ENCODE measurements at regions of chr3 and their contacts with region 1.

Region 1: GRCh38 chr3:151227807-151228665 is 25.0 kb upstream of the GPR171 start:
- DNase-seq: peak; percentile 89
- ATAC-seq: peak; percentile 64
- H3K4me3 Mint-ChIP-seq: peak overlapping the region; percentile 28
- H3K27ac Mint-ChIP-seq: peak overlapping the region; percentile 92
- H3K4me1 Mint-ChIP-seq: peaks cover 64% of the 10 kb centered on the region
- H3K27me3 Mint-ChIP-seq: no peaks in the 10 kb centered on the region
- CTCF ChIP-seq: peak; percentile 92

Region 2: GRCh38 chr3:151002003-151002981 is 225.7 kb before region 1 on chr3:
- CTCF ChIA-PET with region 1: no interaction called
- POLR2A ChIA-PET with region 1: no interaction called
- intact Hi-C with region 1: no loop called
- DNase-seq: no peak
- ATAC-seq: no peak
- H3K4me3 Mint-ChIP-seq: no peak overlapping the region
- H3K27ac Mint-ChIP-seq: no peak overlapping the region
- H3K4me1 Mint-ChIP-seq: no peaks in the 10 kb centered on the region
- H3K27me3 Mint-ChIP-seq: peaks cover 3% of the 10 kb centered on the region
- CTCF ChIP-seq: no peak

Region 3: DNA sequence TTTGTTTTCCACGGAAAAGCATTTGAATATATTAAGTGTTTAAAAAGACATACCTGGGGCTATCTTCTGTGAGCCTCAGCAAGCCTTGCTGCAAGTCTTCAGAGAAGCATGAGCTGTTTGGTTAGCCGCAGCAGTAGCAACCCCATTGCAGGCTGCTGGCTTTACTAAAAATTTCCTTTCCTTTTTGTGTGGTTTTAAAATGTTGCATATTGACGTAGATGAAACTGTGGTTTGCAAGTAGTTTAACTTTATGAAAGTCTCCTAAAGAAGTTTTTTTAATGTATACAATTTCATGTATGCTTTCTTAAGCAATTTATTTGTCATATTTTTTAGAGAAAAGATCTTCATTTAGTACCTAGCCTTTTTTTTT is 25.0 kb before region 1 on chr3 and contains the start of gene GPR171:
- CTCF ChIA-PET with region 1: interaction called, 82 read pairs
- POLR2A ChIA-PET with region 1: interaction called, 39 read pairs
- intact Hi-C with region 1: loop called (anchors 2 kb)
- DNase-seq: peak; percentile 82
- ATAC-seq: peak; percentile 64
- H3K4me3 Mint-ChIP-seq: peak within 1 kb of the TSS; percentile 87
- H3K27ac Mint-ChIP-seq: peak within 1 kb of the TSS; percentile 96
- H3K4me1 Mint-ChIP-seq: peaks cover 54% of the 10 kb centered on the region
- H3K27me3 Mint-ChIP-seq: no peaks in the 10 kb centered on the region
- CTCF ChIP-seq: no peak
- total RNA-seq, gene GPR171: 91.8 to 101 TPM

Region 4: GRCh38 chr3:151268267-151269235 is 40.5 kb after region 1 on chr3:
- CTCF ChIA-PET with region 1: interaction called, 34 read pairs
- POLR2A ChIA-PET with region 1: no interaction called
- intact Hi-C with region 1: no loop called
- DNase-seq: peak; percentile 83
- ATAC-seq: peak; percentile 89
- H3K4me3 Mint-ChIP-seq: peak overlapping the region; percentile 54
- H3K27ac Mint-ChIP-seq: peak overlapping the region; percentile 85
- H3K4me1 Mint-ChIP-seq: peaks cover 27% of the 10 kb centered on the region
- H3K27me3 Mint-ChIP-seq: no peaks in the 10 kb centered on the region
- CTCF ChIP-seq: no peak

Region 5: GRCh38 chr3:151290673-151291072 is 62.6 kb after region 1 on chr3:
- CTCF ChIA-PET with region 1: interaction called, 35 read pairs
- POLR2A ChIA-PET with region 1: no interaction called
- intact Hi-C with region 1: no loop called
- DNase-seq: no peak
- ATAC-seq: no peak
- H3K4me3 Mint-ChIP-seq: no peak overlapping the region
- H3K27ac Mint-ChIP-seq: no peak overlapping the region
- H3K4me1 Mint-ChIP-seq: peaks cover 2% of the 10 kb centered on the region
- H3K27me3 Mint-ChIP-seq: peaks cover 7% of the 10 kb centered on the region
- CTCF ChIP-seq: peak; percentile 65

Region 6: GRCh38 chr3:151367448-151367847 is 139.4 kb after region 1 on chr3:
- CTCF ChIA-PET with region 1: no interaction called
- POLR2A ChIA-PET with region 1: no interaction called
- intact Hi-C with region 1: no loop called
- DNase-seq: no peak
- ATAC-seq: no peak
- H3K4me3 Mint-ChIP-seq: no peak overlapping the region
- H3K27ac Mint-ChIP-seq: no peak overlapping the region
- H3K4me1 Mint-ChIP-seq: no peaks in the 10 kb centered on the region
- H3K27me3 Mint-ChIP-seq: peaks cover 4% of the 10 kb centered on the region
- CTCF ChIP-seq: no peak